Spleen (tissue), 13 donors: ENCODE measurements at regions of chr2 and their contacts with region 1.

Region 1: GRCh38 chr2:15636972-15637785 is 45.5 kb downstream of the DDX1 start:
- DNase-seq: no peak
- H3K4me3 ChIP-seq: no peak overlapping the region
- H3K27ac ChIP-seq: no peak overlapping the region
- H3K4me1 ChIP-seq: peaks cover 6 to 34% (median 21%) of the 10 kb centered on the region in 6 donors
- H3K27me3 ChIP-seq: no peaks in the 10 kb centered on the region
- CTCF ChIP-seq: peak; percentile 46 to 91 (median 77)
- POLR2A ChIP-seq: no peak

Region 2: DNA sequence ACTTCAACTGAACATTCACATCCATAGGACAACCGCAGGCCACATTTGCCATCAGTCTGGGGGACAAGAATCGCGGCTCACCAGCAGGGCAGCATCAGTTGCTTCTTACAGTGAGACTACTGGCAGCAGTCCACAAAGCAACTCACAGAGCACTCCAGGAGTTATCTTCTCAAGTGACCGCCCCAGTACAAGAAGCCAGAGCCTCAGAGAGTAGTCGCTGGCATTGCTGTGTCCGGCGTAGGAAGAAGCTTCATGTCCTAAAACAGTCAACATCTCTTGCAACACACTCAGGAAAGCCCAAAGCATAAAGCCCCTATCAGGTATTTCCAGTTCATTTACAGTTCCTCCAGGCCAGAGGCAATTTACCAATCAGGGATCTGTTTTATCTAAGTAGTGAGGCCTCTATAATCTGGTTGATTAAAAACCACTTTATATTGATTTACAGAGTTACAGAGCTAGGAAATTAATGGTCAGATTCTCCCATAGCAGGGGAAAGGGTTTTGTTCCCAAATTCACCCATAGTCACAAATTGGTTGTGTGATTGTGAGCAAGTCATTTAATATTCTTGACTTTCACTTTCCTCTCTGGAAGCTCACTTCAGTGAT is 253.3 kb before region 1 on chr2:
- intact Hi-C with region 1: no loop called
- DNase-seq: no peak
- H3K4me3 ChIP-seq: no peak overlapping the region
- H3K27ac ChIP-seq: no peak overlapping the region
- H3K4me1 ChIP-seq: no peaks in the 10 kb centered on the region
- H3K27me3 ChIP-seq: no peaks in the 10 kb centered on the region
- CTCF ChIP-seq: no peak
- POLR2A ChIP-seq: no peak

Region 3: DNA sequence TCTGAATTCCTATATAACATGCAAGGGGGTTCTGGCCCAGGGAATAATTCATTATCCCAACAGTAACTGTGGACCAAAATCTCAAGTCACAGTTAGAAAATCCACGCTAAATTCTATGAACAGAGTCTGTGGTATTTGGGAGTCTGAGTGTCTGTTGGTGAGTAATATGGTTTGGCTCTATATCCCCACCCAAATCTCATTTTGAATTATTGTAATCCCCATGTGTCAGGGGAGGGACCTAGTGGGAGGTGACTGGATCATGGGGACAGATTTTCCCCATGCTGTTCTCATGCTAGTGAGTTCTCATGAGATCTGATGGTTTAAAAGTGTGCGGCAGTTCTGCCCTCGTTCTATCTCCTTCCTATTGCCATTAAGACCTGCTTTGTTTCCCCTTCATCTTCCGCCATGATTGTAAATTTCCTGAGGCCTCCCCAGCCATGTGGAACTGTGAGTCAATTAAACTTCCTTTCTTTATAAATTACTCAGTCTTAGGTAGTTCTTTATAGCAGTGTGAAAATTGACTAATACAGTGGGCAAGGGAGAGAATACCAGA is 144.3 kb before region 1 on chr2:
- intact Hi-C with region 1: no loop called
- DNase-seq: no peak
- H3K4me3 ChIP-seq: no peak overlapping the region
- H3K27ac ChIP-seq: no peak overlapping the region
- H3K4me1 ChIP-seq: no peaks in the 10 kb centered on the region
- H3K27me3 ChIP-seq: no peaks in the 10 kb centered on the region
- CTCF ChIP-seq: no peak
- POLR2A ChIP-seq: no peak

Region 4: GRCh38 chr2:15594291-15595256 is 42.6 kb before region 1 on chr2:
- intact Hi-C with region 1: no loop called
- DNase-seq: no peak
- H3K4me3 ChIP-seq: no peak overlapping the region
- H3K27ac ChIP-seq: no peak overlapping the region
- H3K4me1 ChIP-seq: peaks cover 10 to 45% (median 37%) of the 10 kb centered on the region in 6 donors
- H3K27me3 ChIP-seq: no peaks in the 10 kb centered on the region
- CTCF ChIP-seq: no peak
- POLR2A ChIP-seq: no peak

Region 5: GRCh38 chr2:15939854-15940660 is 302.9 kb after region 1 on chr2 and contains the start of gene MYCN:
- intact Hi-C with region 1: loop called (anchors 5 kb)
- DNase-seq: no peak
- H3K4me3 ChIP-seq: peak within 1 kb of the TSS; percentile 16 to 64 (median 39)
- H3K27ac ChIP-seq: no peak within 1 kb of the TSS
- H3K4me1 ChIP-seq: peaks cover 36 to 57% (median 45%) of the 10 kb centered on the region in 6 donors
- H3K27me3 ChIP-seq: peaks cover 0 to 78% (median 40%) of the 10 kb centered on the region in 7 donors
- CTCF ChIP-seq: peak in 1 of 11 experiments; percentile 66
- POLR2A ChIP-seq: no peak
- total RNA-seq, gene MYCN: 0.29 to 1.3 (median 0.58) TPM in 5 of 7 donors, not detected in the others

Region 6: DNA sequence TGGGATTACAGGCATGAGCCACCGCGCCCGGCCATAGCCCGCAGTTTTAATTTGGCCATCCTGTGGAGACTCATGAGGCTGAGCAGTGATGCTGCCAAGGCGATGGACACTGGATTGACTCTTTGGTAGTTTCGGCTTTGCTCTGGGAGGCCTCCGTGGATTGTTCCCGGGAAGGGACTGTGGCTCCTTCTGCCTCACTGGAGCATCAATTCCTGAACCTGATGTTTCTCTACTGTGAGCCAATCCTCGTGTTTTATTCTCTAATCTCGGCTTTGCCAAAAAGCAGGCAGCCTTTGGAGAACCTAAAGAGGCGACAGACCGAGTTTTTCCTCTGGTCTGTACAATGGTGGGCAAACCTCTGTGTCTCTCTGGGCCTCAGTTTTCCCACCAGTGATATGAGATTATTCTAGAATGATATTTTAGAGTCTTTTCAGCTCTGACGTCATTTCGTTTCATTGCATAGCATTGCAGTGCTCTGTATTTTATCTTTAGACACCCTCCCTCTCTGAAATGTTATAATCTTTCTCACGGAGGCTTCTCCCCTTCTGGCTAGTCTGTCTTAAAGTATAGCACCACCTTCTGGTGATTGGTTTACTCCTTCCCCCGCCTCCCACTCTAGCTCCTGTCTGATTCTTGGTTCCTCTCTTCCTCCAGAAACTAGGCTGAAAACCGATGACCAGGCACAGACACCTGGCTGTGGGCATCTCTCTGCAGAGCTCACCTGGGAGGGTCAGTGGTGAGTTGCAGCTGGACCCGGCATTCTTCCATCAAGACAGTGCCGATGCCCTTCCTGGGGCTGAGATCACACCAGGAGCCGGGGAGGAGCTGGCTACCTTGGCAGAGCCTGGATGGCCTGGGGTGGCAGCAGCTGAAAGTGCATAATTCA is 644.5 kb after region 1 on chr2:
- intact Hi-C with region 1: loop called (anchors 5 kb)
- DNase-seq: no peak
- H3K4me3 ChIP-seq: no peak overlapping the region
- H3K27ac ChIP-seq: no peak overlapping the region
- H3K4me1 ChIP-seq: peaks cover 0 to 9% (median 2%) of the 10 kb centered on the region in 6 donors
- H3K27me3 ChIP-seq: no peaks in the 10 kb centered on the region
- CTCF ChIP-seq: peak in 9 of 11 experiments; percentile 14 to 62 (median 41)
- POLR2A ChIP-seq: no peak

Region 7: DNA sequence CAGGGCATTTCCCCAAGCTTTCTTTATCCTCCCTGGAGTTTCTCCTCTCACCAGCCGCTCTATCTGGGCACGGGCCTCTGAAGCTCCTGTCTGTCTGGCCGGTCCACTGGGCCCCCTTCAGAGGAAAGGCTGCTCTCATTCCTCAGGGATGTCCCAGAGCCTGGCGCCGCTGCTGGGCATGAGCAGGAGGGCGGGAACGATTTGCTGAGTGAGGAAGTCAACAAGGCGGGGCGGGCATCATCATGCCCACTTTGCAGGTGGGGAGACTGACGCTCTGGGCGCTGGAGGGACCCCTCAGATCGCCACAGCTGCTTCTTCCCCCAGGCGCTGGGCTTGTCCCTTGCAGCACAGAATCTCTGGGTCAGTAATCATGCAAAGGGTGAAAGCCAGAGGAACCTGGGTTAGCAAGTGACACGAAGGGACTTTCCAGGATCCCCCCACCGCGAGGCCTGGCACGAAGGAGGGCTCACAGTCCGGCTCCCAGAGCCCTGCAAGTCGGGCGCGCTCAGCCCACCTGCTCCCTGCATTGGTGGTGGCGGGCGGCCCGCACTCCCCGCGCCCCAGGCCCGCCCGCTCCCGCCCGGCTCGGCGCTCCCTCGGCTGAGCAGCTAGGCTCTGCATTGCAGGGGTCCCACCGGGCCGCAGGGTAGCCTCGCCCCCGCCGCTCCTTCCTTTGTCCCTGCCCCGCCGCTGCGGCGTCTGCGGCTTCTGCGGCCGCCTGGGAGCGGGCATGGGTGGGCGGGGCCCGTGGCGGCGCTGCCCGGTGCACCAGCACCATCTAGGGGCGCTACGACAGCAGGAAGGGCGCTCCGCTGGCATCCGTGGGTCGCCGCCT is 870.7 kb after region 1 on chr2:
- intact Hi-C with region 1: loop called (anchors 5 kb)
- DNase-seq: no peak
- H3K4me3 ChIP-seq: peak overlapping the region in 6 of 8 donors; percentile 28 to 60 (median 35)
- H3K27ac ChIP-seq: no peak overlapping the region
- H3K4me1 ChIP-seq: peaks cover 0 to 11% (median 8%) of the 10 kb centered on the region in 6 donors
- H3K27me3 ChIP-seq: peaks cover 0 to 75% (median 30%) of the 10 kb centered on the region in 7 donors
- CTCF ChIP-seq: peak in 9 of 11 experiments; percentile 16 to 73 (median 49)
- POLR2A ChIP-seq: no peak

Region 8: DNA sequence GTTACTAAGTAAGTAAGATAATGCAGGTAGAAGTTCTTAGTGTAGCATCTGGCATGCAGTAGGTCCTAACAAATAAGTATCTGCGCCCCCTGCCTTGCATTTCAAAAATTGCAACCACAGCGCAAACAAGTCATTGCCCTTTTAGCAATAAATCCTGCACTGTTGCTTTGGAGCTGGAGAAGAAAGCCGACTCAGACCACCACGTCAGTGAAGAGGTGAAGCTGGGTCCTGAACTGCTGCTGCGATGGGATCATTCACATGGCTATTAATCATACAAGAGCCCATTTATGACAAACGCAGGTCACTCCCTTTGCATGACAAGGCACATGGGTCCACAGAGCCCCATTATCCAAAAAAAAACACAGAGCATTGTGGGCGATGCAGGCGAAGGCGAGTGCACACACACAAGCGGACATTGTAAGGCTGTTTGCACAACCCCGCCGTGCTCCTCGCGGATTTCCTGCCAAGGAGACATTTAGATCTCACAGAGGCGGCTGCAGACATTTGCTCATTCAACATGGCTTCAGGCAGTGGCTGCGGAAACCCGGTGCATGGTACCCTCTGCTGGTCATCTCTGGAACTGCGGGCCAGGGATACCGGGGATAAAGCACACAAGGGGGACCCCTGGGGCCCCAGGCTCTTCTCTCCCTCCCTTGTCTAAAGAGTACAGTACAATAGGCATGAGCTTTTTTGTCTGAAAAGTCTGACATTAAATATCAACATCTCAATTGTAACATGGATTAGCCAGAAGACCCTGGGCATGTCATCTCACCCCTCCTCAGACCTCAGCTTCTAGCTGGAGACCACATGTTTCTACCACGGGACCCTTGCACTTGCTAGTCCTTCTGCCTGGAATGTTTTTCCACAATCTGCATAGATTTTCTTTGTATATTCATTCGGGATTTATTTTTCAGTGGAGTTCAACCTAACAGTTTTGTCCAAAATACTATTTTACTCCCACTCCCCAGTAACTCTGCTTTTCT is 971.8 kb after region 1 on chr2:
- intact Hi-C with region 1: loop called (anchors 5 kb)
- DNase-seq: peak; percentile 94
- H3K4me3 ChIP-seq: peak overlapping the region; percentile 29 to 69 (median 40)
- H3K27ac ChIP-seq: peak overlapping the region in 4 of 8 donors; percentile 8 to 64 (median 58)
- H3K4me1 ChIP-seq: peaks cover 0 to 36% (median 19%) of the 10 kb centered on the region in 6 donors
- H3K27me3 ChIP-seq: no peaks in the 10 kb centered on the region
- CTCF ChIP-seq: peak; percentile 78 to 97 (median 91)
- POLR2A ChIP-seq: no peak

Region 9: GRCh38 chr2:16756831-16757644 is 1119.9 kb after region 1 on chr2:
- intact Hi-C with region 1: loop called (anchors 10 kb)
- DNase-seq: peak; percentile 94
- H3K4me3 ChIP-seq: no peak overlapping the region
- H3K27ac ChIP-seq: no peak overlapping the region
- H3K4me1 ChIP-seq: peaks cover 2 to 13% (median 7%) of the 10 kb centered on the region in 6 donors
- H3K27me3 ChIP-seq: no peaks in the 10 kb centered on the region
- CTCF ChIP-seq: peak; percentile 84 to 92 (median 87)
- POLR2A ChIP-seq: no peak